Activated CD4-positive, alpha-beta memory T cell treated with anti-CD3 and anti-CD28 coated beads for 36 hours (primary cell): ENCODE measurements at regions of chr14 and their contacts with region 1.

Region 1: GRCh38 chr14:99982537-99983250 is 82.5 kb upstream of the EVL start:
- DNase-seq: peak; percentile 73
- H3K4me3 Mint-ChIP-seq: no peak overlapping the region
- H3K27ac Mint-ChIP-seq: no peak overlapping the region
- H3K4me1 Mint-ChIP-seq: peaks cover 8% of the 10 kb centered on the region
- H3K27me3 Mint-ChIP-seq: no peaks in the 10 kb centered on the region

Region 2: DNA sequence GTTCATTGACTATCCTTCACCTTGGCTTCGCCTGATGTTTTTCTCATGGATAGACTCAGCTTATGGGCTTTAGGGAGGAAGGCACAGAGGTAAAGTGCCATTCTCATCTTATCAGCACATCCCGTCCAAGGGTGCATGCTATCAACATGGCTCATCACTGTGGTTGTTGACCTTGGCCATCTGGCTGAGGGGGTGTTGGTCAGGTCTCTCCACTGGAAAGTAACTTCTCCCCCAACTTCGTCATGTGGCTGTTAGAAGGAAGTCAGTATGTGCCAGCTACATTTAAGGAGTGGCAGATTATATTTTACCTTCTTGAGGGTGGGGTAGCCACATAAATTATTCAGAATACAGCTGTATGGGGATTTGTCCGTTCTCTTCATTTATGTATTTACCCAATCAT is 120.6 kb before region 1 on chr14:
- CTCF ChIA-PET with region 1: no interaction called
- POLR2A ChIA-PET with region 1: no interaction called
- intact Hi-C with region 1: no loop called
- DNase-seq: no peak
- H3K4me3 Mint-ChIP-seq: no peak overlapping the region
- H3K27ac Mint-ChIP-seq: no peak overlapping the region
- H3K4me1 Mint-ChIP-seq: peaks cover 2% of the 10 kb centered on the region
- H3K27me3 Mint-ChIP-seq: peaks cover 6% of the 10 kb centered on the region

Region 3: GRCh38 chr14:99884834-99885648 is 97.7 kb before region 1 on chr14:
- CTCF ChIA-PET with region 1: no interaction called
- POLR2A ChIA-PET with region 1: no interaction called
- intact Hi-C with region 1: no loop called
- DNase-seq: no peak
- H3K4me3 Mint-ChIP-seq: no peak overlapping the region
- H3K27ac Mint-ChIP-seq: no peak overlapping the region
- H3K4me1 Mint-ChIP-seq: no peaks in the 10 kb centered on the region
- H3K27me3 Mint-ChIP-seq: peaks cover 11% of the 10 kb centered on the region

Region 4: GRCh38 chr14:99971087-99971940 is 11.4 kb before region 1 on chr14:
- CTCF ChIA-PET with region 1: interaction called, 11 read pairs
- POLR2A ChIA-PET with region 1: no interaction called
- intact Hi-C with region 1: no loop called
- DNase-seq: peak; percentile 89
- H3K4me3 Mint-ChIP-seq: peak overlapping the region; percentile 51
- H3K27ac Mint-ChIP-seq: no peak overlapping the region
- H3K4me1 Mint-ChIP-seq: peaks cover 20% of the 10 kb centered on the region
- H3K27me3 Mint-ChIP-seq: peaks cover 24% of the 10 kb centered on the region

Region 5: GRCh38 chr14:100025111-100025510 is 42.4 kb after region 1 on chr14:
- CTCF ChIA-PET with region 1: interaction called, 9 read pairs
- POLR2A ChIA-PET with region 1: no interaction called
- intact Hi-C with region 1: loop called (anchors 1 kb)
- DNase-seq: peak; percentile 45
- H3K4me3 Mint-ChIP-seq: no peak overlapping the region
- H3K27ac Mint-ChIP-seq: no peak overlapping the region
- H3K4me1 Mint-ChIP-seq: peaks cover 9% of the 10 kb centered on the region
- H3K27me3 Mint-ChIP-seq: no peaks in the 10 kb centered on the region

Region 6: DNA sequence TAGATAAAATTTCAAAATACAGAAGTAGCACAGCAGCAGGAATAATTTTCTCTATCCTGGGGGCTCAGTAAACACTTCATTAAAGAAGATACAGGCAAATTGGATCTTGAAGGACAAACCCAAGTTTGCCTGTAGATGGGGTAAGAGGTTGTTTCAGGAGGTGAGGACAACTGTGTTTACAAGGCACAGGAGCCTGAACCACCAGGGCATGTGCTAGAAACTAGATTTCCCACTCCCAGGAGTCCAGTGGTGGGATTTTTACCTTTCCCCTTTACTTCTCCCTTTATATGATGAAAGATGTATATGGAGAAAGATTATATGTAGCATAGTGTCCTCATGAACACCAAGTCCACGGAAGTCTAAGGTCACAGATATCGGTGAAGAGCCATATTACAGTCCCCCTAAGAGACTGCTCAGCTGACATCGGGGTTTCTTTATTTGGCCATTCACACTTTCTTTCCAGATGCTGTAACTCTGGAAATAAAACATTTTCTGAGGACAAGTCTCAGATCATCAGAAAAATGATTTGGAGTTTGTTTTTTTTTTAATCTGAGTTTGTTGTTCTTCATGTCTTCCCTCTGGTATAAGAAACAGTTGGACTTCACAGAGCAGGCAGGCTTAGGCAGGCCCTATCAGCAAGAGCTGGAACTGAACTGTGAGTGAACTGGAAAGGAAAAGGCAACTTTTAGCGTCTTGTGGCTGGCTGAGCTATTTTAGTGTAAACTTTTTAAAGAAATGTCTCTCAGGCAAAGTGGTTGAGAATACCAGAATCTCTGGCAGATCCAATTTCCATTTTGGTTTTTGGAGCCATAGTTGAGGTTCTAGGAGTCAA is 74.5 kb after region 1 on chr14:
- CTCF ChIA-PET with region 1: interaction called, 11 read pairs
- POLR2A ChIA-PET with region 1: no interaction called
- intact Hi-C with region 1: no loop called
- DNase-seq: no peak
- H3K4me3 Mint-ChIP-seq: no peak overlapping the region
- H3K27ac Mint-ChIP-seq: peak overlapping the region; percentile 56
- H3K4me1 Mint-ChIP-seq: peaks cover 49% of the 10 kb centered on the region
- H3K27me3 Mint-ChIP-seq: no peaks in the 10 kb centered on the region

Region 7: GRCh38 chr14:100155042-100155846 is 172.6 kb after region 1 on chr14:
- CTCF ChIA-PET with region 1: interaction called, 28 read pairs
- POLR2A ChIA-PET with region 1: no interaction called
- intact Hi-C with region 1: loop called (anchors 2 kb)
- DNase-seq: peak; percentile 64
- H3K4me3 Mint-ChIP-seq: no peak overlapping the region
- H3K27ac Mint-ChIP-seq: peak overlapping the region; percentile 7
- H3K4me1 Mint-ChIP-seq: peaks cover 3% of the 10 kb centered on the region
- H3K27me3 Mint-ChIP-seq: peaks cover 26% of the 10 kb centered on the region